ENCODE measurements at regions of chr11 and their contacts with region 1.

Region 1: DNA sequence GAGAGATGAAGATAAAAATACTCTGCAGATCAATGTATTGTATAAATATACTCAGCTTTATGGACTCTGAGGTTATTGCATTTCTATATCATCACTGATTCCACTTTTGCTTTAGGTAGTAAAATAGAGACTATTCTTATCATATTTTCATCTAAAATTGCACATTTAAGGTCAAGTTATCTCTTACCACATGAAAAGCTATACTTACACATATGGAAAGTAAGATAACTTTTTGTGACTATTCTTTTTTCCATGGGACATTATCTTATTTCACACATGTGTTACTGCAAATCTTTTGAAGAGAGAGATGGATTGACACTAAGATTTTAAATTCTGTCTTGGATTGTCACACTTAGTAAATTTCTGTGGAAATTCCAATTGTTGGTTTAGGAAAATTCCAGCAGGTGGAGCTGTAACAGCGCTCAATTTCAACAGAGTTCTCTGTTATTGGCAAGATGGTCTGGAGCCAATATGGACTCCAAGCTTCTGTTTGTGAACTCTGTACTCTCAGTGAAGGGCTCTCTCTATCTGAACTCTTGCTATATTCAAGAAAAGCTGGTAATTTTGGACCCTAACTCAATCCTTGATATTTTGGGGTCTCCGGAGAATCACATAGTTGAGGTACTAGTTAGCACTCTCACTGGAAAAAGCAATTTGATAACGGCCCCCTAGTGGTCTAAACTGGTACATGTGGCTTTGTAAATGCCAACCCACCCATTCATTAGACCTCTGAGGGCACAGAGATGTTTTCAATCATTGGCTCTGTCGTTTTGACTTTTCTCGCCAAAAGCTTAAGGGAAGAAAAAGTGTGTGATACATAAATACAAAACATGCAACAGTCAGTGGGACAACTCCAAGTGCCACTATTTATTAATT is 429.7 kb downstream of the ETS1 start:
- DNase-seq: peak; percentile 41
- H3K4me3 ChIP-seq: peak overlapping the region; percentile 38; the same call in 1 of the 2 replicates
- H3K27ac ChIP-seq: no peak overlapping the region
- H3K27me3 ChIP-seq: peaks cover 12% of the 10 kb centered on the region
- CTCF ChIP-seq: peak; percentile 82

Region 2: DNA sequence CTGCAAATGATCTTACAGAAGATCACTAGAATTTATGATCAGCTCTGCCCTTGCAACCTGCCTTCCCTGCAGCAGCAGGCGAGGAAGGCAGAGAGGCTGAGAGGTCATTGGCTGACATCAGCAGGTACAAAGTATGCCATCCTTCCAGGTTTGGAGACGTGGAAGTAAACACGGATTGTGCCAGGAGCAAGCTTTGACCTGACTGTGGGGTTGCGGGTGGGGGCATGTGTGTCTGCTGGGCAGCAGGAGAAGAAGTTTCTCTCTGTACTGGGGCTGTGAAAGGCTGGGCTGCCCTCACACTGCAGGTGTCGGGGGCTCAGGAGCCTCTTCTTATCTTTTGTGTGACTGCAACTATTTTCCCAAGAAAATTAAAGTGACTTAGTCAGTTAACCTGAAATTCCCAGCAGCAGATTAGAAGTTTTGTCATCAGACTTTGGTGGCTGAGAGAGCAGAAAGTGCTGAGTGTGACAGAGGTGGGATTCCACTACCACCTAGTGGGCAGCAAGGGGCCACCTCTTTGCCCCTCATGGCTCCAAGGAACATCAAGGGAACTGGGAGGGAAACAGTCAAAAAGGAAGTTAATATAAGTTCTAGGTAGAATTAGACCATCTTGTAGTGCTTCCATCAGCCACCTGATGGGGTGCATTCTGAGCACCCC is 136.2 kb before region 1 on chr11:
- CTCF ChIA-PET with region 1: interaction called, 170 read pairs
- POLR2A ChIA-PET with region 1: no interaction called
- DNase-seq: no peak
- H3K4me3 ChIP-seq: no peak overlapping the region
- H3K27ac ChIP-seq: no peak overlapping the region
- H3K27me3 ChIP-seq: no peaks in the 10 kb centered on the region
- CTCF ChIP-seq: peak; percentile 39

Region 3: DNA sequence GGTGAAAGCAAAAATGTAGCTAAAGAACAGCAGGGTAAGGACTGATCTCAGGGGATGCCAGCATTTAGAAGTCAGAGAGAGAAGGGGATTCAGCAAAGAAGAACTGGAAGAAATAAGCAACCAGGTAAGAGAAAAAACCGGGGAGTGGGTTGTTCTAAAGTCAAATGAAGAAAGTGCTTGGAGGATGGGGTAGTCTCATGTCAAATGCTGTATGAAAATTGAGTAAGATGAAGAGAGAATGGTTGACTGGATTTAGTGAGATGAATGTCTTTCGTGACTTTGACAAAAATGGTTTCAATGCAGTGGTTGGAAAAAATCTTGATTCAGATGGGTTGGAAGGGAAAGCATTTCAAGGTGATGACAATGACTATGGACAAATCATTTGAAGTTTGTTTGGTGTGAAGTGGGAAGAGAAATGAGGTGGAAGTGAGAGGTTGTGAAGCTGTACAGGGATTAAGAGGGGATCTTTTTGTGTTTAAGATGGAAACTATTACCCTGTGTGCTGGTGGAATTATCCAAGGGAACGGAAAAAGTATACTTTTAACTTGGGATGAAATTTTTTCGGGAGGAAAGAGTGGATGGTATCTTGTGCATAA is 54.3 kb before region 1 on chr11:
- CTCF ChIA-PET with region 1: interaction called, 10 read pairs
- POLR2A ChIA-PET with region 1: no interaction called
- DNase-seq: no peak
- H3K4me3 ChIP-seq: no peak overlapping the region
- H3K27ac ChIP-seq: no peak overlapping the region
- H3K27me3 ChIP-seq: no peaks in the 10 kb centered on the region
- CTCF ChIP-seq: no peak

Region 4: GRCh38 chr11:128180446-128181087 is 22.9 kb after region 1 on chr11:
- CTCF ChIA-PET with region 1: interaction called, 172 read pairs
- POLR2A ChIA-PET with region 1: no interaction called
- DNase-seq: peak; percentile 56
- H3K4me3 ChIP-seq: no peak overlapping the region
- H3K27ac ChIP-seq: no peak overlapping the region
- H3K27me3 ChIP-seq: no peaks in the 10 kb centered on the region
- CTCF ChIP-seq: no peak

Region 5: GRCh38 chr11:128624269-128625175 is 466.9 kb after region 1 on chr11:
- CTCF ChIA-PET with region 1: interaction called, 10 read pairs
- POLR2A ChIA-PET with region 1: no interaction called
- DNase-seq: no peak
- H3K4me3 ChIP-seq: no peak overlapping the region
- H3K27ac ChIP-seq: no peak overlapping the region
- H3K27me3 ChIP-seq: no peaks in the 10 kb centered on the region
- CTCF ChIP-seq: no peak

Region 6: DNA sequence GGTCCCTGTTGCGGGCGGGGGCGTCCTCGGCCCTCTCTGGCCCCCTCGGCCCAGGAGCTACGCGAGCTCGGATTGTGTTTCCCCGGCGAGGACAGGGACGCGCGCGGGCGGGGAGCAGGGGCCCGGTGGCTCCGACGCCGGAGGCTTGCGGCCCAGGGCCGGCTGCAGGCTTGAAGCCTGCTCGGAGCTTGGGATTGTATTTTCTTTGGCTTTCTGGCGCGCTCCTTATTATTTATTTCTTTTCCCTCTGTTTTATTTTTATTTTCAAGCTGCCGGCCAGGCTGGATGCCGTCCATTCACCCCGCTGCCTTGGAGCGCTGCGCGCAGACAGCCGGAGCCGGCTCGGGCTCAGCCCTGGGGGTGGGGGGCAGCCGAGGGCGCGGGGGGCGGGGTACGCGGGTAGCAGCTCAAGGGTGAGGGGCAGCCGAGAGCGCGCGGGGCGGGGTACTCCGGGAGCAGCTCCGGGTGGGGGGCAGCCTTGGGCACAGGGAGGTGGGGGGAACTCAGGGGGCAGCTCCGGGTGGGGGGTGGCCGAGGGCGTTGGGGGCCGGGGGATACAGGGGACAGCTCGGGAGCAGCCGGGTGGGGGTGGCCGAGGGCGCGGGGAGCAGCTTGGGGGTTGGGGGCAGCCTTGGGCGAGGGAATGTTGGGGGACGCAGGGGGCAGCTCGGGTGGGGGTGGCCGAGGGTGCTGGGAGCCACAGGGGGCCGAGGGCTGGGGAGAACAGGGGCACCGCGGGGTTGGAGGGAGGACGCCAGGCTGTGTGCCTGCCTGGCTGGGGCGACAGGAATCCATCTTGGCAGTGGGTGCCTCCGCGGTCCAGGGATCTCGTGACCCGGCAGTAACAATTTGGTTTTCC is 666.8 kb after region 1 on chr11:
- CTCF ChIA-PET with region 1: interaction called, 140 read pairs
- POLR2A ChIA-PET with region 1: no interaction called
- DNase-seq: no peak
- H3K4me3 ChIP-seq: no peak overlapping the region
- H3K27ac ChIP-seq: no peak overlapping the region
- H3K27me3 ChIP-seq: peaks cover 4% of the 10 kb centered on the region
- CTCF ChIP-seq: no peak

Measured in AG04450 (cell line).